ENCODE measurements at regions of chr20 and their contacts with region 1.

Region 1: DNA sequence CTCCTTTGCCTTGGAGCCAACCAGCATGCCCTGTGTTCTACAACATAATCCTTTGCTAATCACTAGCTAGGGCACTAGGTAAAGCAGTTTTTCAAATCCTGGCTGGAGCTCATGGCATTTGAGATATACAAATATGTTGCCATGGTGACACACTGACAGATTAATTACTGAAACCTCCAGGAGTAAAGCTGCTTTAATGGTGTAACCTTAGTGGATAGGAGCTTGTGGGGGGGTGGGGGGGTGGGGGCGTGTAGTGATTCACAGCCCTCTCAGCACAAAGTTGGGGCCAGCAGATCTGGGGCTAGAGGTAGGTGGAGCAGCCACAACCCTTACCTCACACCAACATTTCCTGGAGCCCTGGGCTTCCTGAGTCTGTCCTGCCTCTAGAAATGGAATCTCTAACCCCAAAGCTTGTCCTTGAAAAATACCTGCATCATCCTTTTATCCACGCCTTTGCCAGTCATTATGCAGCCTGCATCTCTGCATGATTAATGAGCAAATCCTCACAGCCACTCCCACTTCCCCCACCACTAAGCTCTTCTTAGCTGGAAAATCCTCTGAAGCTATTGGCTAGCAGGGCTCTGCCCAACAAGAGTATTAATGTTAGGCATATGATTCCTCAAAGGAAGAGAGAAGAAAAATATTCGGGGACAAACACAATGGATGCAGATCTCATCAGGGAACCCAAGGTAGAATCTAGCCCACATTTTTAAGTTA is 84.5 kb upstream of the PRND start:
- DNase-seq: no peak
- ATAC-seq: no peak
- H3K4me3 ChIP-seq: no peak overlapping the region
- H3K4me3 Mint-ChIP-seq: no peak overlapping the region
- H3K27ac ChIP-seq: no peak overlapping the region
- H3K27ac Mint-ChIP-seq: no peak overlapping the region
- H3K4me1 ChIP-seq: no peaks in the 10 kb centered on the region
- H3K4me1 Mint-ChIP-seq: no peaks in the 10 kb centered on the region
- H3K27me3 ChIP-seq: peaks cover 0 to 8% of the 10 kb centered on the region in 2 experiments
- H3K27me3 Mint-ChIP-seq: peaks cover 0 to 7% of the 10 kb centered on the region in 2 donors

Region 2: DNA sequence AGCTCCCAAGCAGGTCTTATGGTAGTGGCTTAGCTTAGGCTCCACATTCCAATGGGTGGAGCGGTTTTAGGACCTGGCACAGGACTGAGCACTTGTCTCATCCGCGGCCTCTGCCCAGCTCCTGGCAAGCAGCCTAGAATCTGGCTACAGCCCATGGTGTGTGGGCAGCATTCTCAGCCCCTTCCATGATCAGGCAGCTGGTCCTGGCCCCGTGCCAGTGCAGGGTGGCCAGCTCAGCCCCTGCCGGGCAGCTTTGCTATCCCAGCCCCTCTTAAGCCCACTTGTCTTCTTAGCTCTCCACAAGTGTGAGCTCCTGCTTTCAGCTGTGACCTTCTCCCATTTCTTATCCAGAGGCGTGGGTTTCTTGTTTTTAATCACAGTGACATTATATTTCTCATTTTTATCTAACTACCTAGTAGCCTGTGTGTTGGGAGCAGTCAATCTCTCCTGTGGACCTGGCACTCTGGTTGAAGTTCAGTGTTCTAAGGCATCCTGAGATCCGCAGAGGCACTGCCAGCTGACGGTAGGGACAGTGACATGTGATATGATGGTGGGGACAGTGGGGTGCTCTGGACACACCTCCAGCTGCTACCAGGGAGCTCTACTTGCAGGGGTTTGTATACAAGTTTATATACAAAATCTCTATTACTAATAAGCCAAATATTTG is 35.5 kb before region 1 on chr20:
- CTCF ChIA-PET with region 1: no interaction called
- POLR2A ChIA-PET with region 1: no interaction called
- DNase-seq: no peak
- ATAC-seq: no peak
- H3K4me3 ChIP-seq: no peak overlapping the region
- H3K4me3 Mint-ChIP-seq: no peak overlapping the region
- H3K27ac ChIP-seq: no peak overlapping the region
- H3K27ac Mint-ChIP-seq: no peak overlapping the region
- H3K4me1 ChIP-seq: no peaks in the 10 kb centered on the region
- H3K4me1 Mint-ChIP-seq: no peaks in the 10 kb centered on the region
- H3K27me3 ChIP-seq: peaks cover 0 to 29% of the 10 kb centered on the region in 2 experiments
- H3K27me3 Mint-ChIP-seq: peaks cover 36 to 54% of the 10 kb centered on the region in 2 donors

Region 3: GRCh38 chr20:4681991-4682401 is 44.8 kb after region 1 on chr20:
- CTCF ChIA-PET with region 1: no interaction called
- POLR2A ChIA-PET with region 1: no interaction called
- DNase-seq: no peak
- ATAC-seq: no peak
- H3K4me3 ChIP-seq: no peak overlapping the region
- H3K4me3 Mint-ChIP-seq: no peak overlapping the region
- H3K27ac ChIP-seq: no peak overlapping the region
- H3K27ac Mint-ChIP-seq: no peak overlapping the region
- H3K4me1 ChIP-seq: peaks cover 3 to 37% of the 10 kb centered on the region in 2 experiments
- H3K4me1 Mint-ChIP-seq: peaks cover 32 to 38% (median 36%) of the 10 kb centered on the region in 3 donors
- H3K27me3 ChIP-seq: no peaks in the 10 kb centered on the region
- H3K27me3 Mint-ChIP-seq: no peaks in the 10 kb centered on the region

Region 4: GRCh38 chr20:4886771-4887527 is 249.7 kb after region 1 on chr20:
- CTCF ChIA-PET with region 1: no interaction called
- POLR2A ChIA-PET with region 1: no interaction called
- DNase-seq: no peak
- ATAC-seq: no peak
- H3K4me3 ChIP-seq: no peak overlapping the region
- H3K4me3 Mint-ChIP-seq: no peak overlapping the region
- H3K27ac ChIP-seq: no peak overlapping the region
- H3K27ac Mint-ChIP-seq: peak overlapping the region in 1 of 2 donors; percentile 22
- H3K4me1 ChIP-seq: no peaks in the 10 kb centered on the region
- H3K4me1 Mint-ChIP-seq: peaks cover 0 to 4% (median 0%) of the 10 kb centered on the region in 3 donors
- H3K27me3 ChIP-seq: no peaks in the 10 kb centered on the region
- H3K27me3 Mint-ChIP-seq: no peaks in the 10 kb centered on the region

Region 5: GRCh38 chr20:4961746-4962145 is 324.5 kb after region 1 on chr20:
- CTCF ChIA-PET with region 1: no interaction called
- POLR2A ChIA-PET with region 1: interaction called in 1 of 2 experiments, 12 read pairs
- DNase-seq: peak in 30 of 35 experiments; percentile 7 to 60 (median 30)
- ATAC-seq: peak; percentile 77 to 88 (median 81)
- H3K4me3 ChIP-seq: no peak overlapping the region
- H3K4me3 Mint-ChIP-seq: peak overlapping the region; percentile 39 to 66 (median 39)
- H3K27ac ChIP-seq: peak overlapping the region; percentile 83
- H3K27ac Mint-ChIP-seq: peak overlapping the region; percentile 87 to 94
- H3K4me1 ChIP-seq: peaks cover 5 to 17% of the 10 kb centered on the region in 2 experiments
- H3K4me1 Mint-ChIP-seq: peaks cover 19 to 30% (median 24%) of the 10 kb centered on the region in 3 donors
- H3K27me3 ChIP-seq: no peaks in the 10 kb centered on the region
- H3K27me3 Mint-ChIP-seq: no peaks in the 10 kb centered on the region

Measured in T-cell (primary cell).